Heart left ventricle (tissue), 16 donors: ENCODE measurements at regions of chr13 and their contacts with region 1.

Region 1: DNA sequence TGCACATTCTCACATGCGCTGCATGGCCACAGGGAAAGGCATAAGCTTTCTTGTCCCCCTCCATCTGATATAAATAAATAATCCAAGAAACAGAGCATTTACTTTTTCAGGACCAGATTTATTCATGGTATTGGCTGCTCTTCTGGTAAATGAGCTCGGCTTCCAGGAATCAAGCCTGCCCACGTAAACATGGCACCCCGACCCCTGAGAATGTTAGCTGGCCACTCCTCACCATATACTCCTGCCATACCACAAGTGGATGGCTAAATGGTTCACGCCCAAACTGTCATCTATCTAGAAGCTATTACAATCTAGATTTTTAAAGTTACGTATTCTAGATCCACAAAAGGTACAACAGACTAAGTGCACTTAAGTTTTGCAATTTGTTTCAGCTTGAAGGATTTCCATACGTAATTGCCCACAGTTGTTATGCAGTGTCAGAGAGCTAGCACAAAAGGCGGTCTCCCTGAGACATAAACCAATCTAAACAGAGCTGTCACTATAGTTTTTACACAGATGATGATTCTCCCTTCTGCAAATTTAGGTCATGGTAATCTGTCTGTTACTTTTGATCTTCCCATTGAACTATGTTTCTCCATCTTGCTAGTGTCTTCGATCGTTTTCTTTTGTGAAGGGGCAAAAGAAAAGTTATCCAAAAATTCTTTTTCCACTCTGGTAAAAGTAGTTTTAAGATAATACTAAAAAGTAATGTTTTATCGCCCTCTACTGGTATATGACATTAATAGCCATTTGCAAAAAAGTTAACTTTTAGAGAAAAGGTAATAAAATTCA is 16.2 kb upstream of the FOXO1 start:
- DNase-seq: no peak
- ATAC-seq: no peak
- H3K4me3 ChIP-seq: no peak overlapping the region
- H3K27ac ChIP-seq: no peak overlapping the region
- H3K4me1 ChIP-seq: peaks cover 0 to 18% (median 5%) of the 10 kb centered on the region in 12 donors
- H3K27me3 ChIP-seq: no peaks in the 10 kb centered on the region
- CTCF ChIP-seq: peak; percentile 59 to 85 (median 72)
- POLR2A ChIP-seq: no peak

Region 2: DNA sequence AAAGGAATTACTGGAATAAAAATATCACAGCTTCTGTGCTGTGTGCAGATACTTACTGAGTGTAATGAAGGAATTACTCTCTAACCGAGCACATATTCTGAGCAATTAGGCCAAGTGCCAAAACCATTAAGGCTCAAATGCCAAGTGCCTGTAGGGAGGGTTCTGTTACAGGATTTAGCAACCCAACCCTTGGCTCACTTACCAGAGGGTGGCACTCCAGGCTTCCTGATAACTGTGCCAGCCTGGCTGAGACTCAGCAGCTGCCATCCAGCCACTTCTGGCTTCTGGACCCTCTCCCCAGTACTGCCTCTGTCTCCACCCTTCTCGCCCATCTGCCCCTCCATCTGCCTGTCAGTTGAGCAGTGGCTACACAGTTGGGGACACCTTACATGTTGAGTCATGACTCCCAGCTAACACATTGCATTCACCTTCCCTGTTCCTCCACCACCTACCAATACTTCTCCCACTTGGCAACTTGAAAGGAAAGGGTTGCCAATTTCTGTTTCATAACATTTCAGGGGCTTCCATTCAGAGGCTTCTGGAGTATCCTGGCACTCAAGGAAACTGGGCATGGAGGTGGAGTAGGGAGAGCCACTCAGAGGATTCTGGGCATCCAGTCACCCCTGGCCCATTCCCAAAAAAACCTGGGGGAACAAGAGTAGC is 916.7 kb before region 1 on chr13:
- intact Hi-C with region 1: loop called in 6 of 10 experiments (anchors 5 to 10 kb)
- DNase-seq: peak in 4 of 5 donors; percentile 25 to 58 (median 44)
- ATAC-seq: peak; percentile 67 to 91 (median 87)
- H3K4me3 ChIP-seq: no peak overlapping the region
- H3K27ac ChIP-seq: peak overlapping the region in 1 of 12 donors; percentile 11
- H3K4me1 ChIP-seq: peaks cover 0 to 24% (median 3%) of the 10 kb centered on the region in 12 donors
- H3K27me3 ChIP-seq: no peaks in the 10 kb centered on the region
- CTCF ChIP-seq: peak in 10 of 12 donors; percentile 16 to 49 (median 35)
- POLR2A ChIP-seq: no peak

Region 3: DNA sequence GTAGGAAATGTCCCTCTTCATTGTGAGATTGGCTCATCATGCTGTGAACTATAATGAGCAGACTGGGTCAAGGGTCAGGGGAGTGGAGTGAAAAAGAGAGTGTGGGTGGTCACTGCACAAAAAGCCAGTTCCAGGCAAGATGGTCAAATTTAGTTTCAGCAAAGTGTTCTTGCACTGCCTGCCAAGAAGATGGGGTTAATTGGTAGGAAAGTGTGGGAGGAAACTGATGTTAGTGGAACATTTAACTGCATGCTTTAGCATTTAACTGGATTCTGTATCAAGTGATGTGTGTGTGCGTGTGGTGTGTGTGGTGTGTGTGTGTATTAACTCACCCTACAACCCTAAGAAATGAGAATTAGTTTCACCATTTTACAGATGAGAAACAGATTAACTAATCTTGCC is 895.6 kb before region 1 on chr13:
- intact Hi-C with region 1: loop called in 2 of 10 experiments (anchors 5 to 10 kb)
- DNase-seq: peak in 1 of 5 donors; percentile 11
- ATAC-seq: peak in 3 of 4 donors; percentile 41 to 62 (median 48)
- H3K4me3 ChIP-seq: no peak overlapping the region
- H3K27ac ChIP-seq: peak overlapping the region in 2 of 12 donors; percentile 21 to 36
- H3K4me1 ChIP-seq: peaks cover 0 to 26% (median 4%) of the 10 kb centered on the region in 12 donors
- H3K27me3 ChIP-seq: peaks cover 0 to 3% (median 0%) of the 10 kb centered on the region in 9 donors
- CTCF ChIP-seq: no peak
- POLR2A ChIP-seq: no peak

Region 4: DNA sequence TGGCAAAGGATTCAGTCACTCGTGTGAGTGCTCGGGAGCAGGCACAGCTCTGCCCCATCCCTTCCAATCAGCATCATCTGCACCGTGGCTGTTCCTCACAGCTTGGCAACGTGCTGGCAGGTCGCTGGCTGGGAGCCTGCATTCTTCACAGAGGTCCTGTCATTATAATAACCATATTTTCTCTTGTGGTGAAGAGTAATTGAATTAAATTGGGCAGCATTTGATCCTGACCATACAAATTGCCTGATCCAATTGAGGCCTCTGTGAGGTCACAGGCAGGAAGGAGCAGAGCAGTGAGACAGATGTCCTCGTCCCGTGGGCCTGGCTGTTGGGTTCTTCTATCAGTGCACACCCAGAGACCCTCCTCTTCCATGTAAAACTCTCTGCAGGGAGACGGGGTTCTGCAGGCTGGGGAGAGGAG is 619.4 kb before region 1 on chr13:
- intact Hi-C with region 1: loop called in 7 of 10 experiments (anchors 2 to 5 kb)
- DNase-seq: no peak
- ATAC-seq: no peak
- H3K4me3 ChIP-seq: no peak overlapping the region
- H3K27ac ChIP-seq: no peak overlapping the region
- H3K4me1 ChIP-seq: peaks cover 0 to 28% (median 2%) of the 10 kb centered on the region in 12 donors
- H3K27me3 ChIP-seq: no peaks in the 10 kb centered on the region
- CTCF ChIP-seq: no peak
- POLR2A ChIP-seq: no peak

Region 5: GRCh38 chr13:40770934-40771618 is 88.4 kb after region 1 on chr13 and contains the start of gene MRPS31:
- intact Hi-C with region 1: loop called in 1 of 10 experiments (anchors 5 kb)
- DNase-seq: peak; percentile 95 to 98 (median 97)
- ATAC-seq: peak; percentile 99 to 100 (median 100)
- H3K4me3 ChIP-seq: peak within 1 kb of the TSS; percentile 58 to 90 (median 75)
- H3K27ac ChIP-seq: peak within 1 kb of the TSS; percentile 63 to 92 (median 84)
- H3K4me1 ChIP-seq: peaks cover 0 to 25% (median 13%) of the 10 kb centered on the region in 12 donors
- H3K27me3 ChIP-seq: no peaks in the 10 kb centered on the region
- CTCF ChIP-seq: no peak
- POLR2A ChIP-seq: peak in 1 of 2 donors; percentile 63
- total RNA-seq, gene MRPS31: 21.9 to 33.1 (median 27.1) TPM